ENCODE measurements at regions of chr9 and their contacts with region 1.

Region 1: DNA sequence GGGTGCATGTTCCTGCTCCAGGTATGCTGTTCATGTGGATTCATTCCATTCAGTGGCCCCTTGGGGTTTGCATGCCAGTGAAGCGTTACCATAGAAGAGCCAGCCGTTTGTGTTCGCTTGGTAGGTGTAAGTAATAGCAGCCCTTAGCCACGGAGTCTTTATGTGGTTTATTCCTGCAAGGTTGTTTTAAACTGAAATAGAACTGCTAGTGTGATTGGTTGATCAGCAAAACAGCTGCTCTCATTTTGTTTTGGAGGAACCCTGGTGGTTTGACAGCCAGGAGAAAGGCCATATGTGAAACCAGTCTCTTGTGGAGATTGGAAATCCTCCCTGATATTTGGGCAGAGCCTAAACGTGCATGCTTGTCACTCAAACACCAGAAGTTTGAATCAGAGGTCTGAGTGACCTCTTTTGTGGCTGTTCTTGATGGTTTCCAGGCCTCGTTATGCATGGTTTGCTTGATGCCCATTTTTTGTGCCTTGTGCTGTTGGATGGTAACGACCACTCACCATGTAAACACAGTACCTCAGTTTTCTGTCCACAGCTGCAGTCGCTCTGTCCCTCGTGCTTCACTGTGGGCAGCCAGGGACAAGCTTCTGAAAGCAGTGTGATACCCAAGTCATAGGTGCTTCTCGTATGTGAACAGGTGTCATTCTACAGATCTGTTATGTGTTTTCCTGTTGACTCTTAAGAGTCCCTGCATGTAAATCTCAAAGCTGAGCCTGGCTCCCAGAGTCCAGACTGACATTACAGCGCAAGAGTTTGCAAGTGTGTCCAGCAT is 58.3 kb upstream of the NXNL2 start:
- DNase-seq: peak; percentile 18
- ATAC-seq: peak; percentile 62
- H3K4me3 Mint-ChIP-seq: no peak overlapping the region
- H3K27ac Mint-ChIP-seq: peak overlapping the region; percentile 51
- H3K4me1 Mint-ChIP-seq: peaks cover 20% of the 10 kb centered on the region
- H3K27me3 Mint-ChIP-seq: no peaks in the 10 kb centered on the region

Region 2: DNA sequence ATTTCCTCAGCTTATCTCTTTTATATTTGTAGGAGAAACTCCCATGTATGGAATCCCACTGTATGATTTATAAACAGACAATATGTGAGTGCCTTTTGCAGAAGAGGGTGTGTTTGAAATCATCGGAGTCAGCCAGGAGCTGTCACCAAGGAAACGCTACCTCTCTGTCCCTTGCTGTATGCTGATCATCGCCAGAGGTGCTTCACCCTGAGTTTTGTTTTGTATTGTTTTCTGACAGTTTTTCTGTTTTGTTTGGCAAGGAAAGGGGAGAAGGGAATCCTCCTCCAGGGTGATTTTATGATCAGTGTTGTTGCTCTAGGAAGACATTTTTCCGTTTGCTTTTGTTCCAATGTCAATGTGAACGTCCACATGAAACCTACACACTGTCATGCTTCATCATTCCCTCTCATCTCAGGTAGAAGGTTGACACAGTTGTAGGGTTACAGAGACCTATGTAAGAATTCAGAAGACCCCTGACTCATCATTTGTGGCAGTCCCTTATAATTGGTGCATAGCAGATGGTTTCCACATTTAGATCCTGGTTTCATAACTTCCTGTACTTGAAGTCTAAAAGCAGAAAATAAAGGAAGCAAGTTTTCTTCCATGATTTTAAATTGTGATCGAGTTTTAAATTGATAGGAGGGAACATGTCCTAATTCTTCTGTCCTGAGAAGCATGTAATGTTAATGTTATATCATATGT is 768.7 kb before region 1 on chr9:
- CTCF ChIA-PET with region 1: no interaction called
- POLR2A ChIA-PET with region 1: no interaction called
- intact Hi-C with region 1: loop called in 1 of 2 experiments (anchors 1 kb)
- DNase-seq: peak; percentile 31
- ATAC-seq: peak; percentile 40
- H3K4me3 Mint-ChIP-seq: no peak overlapping the region
- H3K27ac Mint-ChIP-seq: no peak overlapping the region
- H3K4me1 Mint-ChIP-seq: peaks cover 44% of the 10 kb centered on the region
- H3K27me3 Mint-ChIP-seq: peaks cover 5% of the 10 kb centered on the region

Region 3: GRCh38 chr9:88173378-88173999 is 303.2 kb before region 1 on chr9:
- CTCF ChIA-PET with region 1: no interaction called
- POLR2A ChIA-PET with region 1: no interaction called
- intact Hi-C with region 1: loop called in 1 of 2 experiments (anchors 10 kb)
- DNase-seq: peak; percentile 67
- ATAC-seq: peak; percentile 55
- H3K4me3 Mint-ChIP-seq: no peak overlapping the region
- H3K27ac Mint-ChIP-seq: no peak overlapping the region
- H3K4me1 Mint-ChIP-seq: peaks cover under 1% of the 10 kb centered on the region
- H3K27me3 Mint-ChIP-seq: peaks cover 4% of the 10 kb centered on the region

Region 4: GRCh38 chr9:88310310-88310995 is 166.2 kb before region 1 on chr9:
- CTCF ChIA-PET with region 1: no interaction called
- POLR2A ChIA-PET with region 1: no interaction called
- intact Hi-C with region 1: no loop called
- DNase-seq: no peak
- ATAC-seq: no peak
- H3K4me3 Mint-ChIP-seq: no peak overlapping the region
- H3K27ac Mint-ChIP-seq: peak overlapping the region; percentile 25
- H3K4me1 Mint-ChIP-seq: peaks cover 31% of the 10 kb centered on the region
- H3K27me3 Mint-ChIP-seq: peaks cover 6% of the 10 kb centered on the region

Region 5: GRCh38 chr9:88399966-88400365 is 76.7 kb before region 1 on chr9:
- CTCF ChIA-PET with region 1: no interaction called
- POLR2A ChIA-PET with region 1: no interaction called
- intact Hi-C with region 1: no loop called
- DNase-seq: no peak
- ATAC-seq: no peak
- H3K4me3 Mint-ChIP-seq: no peak overlapping the region
- H3K27ac Mint-ChIP-seq: no peak overlapping the region
- H3K4me1 Mint-ChIP-seq: peaks cover 20% of the 10 kb centered on the region
- H3K27me3 Mint-ChIP-seq: no peaks in the 10 kb centered on the region

Region 6: DNA sequence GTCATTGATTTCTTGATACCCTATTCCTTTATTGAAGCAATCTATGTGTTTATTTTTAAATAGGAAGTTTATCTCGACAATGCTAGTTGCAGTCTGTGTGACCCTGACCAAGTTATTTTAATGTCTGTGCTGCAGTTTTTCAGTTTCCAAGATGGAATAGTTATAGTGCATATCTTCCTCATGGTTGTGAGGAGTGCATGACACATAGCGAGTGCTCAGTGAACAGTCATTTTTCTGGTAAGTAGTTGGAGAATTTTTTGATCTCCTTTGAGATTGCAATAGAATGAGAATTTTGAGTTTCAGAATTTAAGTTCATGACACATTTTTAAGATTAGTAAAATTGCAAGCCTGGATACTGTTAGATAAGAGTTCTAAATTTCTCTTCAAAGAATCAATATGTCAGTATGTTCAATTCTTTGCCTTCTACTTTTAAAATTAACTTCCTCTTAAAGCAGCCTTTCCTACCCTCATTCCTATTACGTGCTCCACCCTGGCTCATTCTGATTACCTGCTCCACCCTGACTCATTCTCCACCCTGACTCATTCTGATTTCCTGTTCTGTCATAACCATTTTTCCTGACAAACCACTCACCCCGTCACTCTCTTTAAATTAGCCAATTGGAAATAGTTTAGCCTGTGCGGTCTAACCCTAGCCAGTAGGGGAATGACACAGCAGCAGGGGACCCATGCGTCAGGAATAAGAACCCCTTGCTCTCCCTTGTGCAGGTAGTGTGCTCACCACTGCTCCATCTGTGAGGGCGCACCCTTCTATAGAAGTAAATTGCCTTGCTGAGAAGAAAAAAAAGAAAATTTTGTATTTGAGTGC is 57.8 kb before region 1 on chr9:
- CTCF ChIA-PET with region 1: no interaction called
- POLR2A ChIA-PET with region 1: no interaction called
- intact Hi-C with region 1: loop called in 1 of 2 experiments (anchors 1 kb)
- DNase-seq: peak; percentile 68
- ATAC-seq: peak; percentile 95
- H3K4me3 Mint-ChIP-seq: no peak overlapping the region
- H3K27ac Mint-ChIP-seq: peak overlapping the region; percentile 86
- H3K4me1 Mint-ChIP-seq: peaks cover 17% of the 10 kb centered on the region
- H3K27me3 Mint-ChIP-seq: no peaks in the 10 kb centered on the region

Region 7: GRCh38 chr9:88614359-88614758 is 137.7 kb after region 1 on chr9:
- CTCF ChIA-PET with region 1: no interaction called
- POLR2A ChIA-PET with region 1: no interaction called
- intact Hi-C with region 1: no loop called
- DNase-seq: no peak
- ATAC-seq: no peak
- H3K4me3 Mint-ChIP-seq: no peak overlapping the region
- H3K27ac Mint-ChIP-seq: no peak overlapping the region
- H3K4me1 Mint-ChIP-seq: no peaks in the 10 kb centered on the region
- H3K27me3 Mint-ChIP-seq: peaks cover 10% of the 10 kb centered on the region

Region 8: GRCh38 chr9:88991066-88992034 is 514.7 kb after region 1 on chr9 and contains the start of gene S1PR3:
- CTCF ChIA-PET with region 1: no interaction called
- POLR2A ChIA-PET with region 1: no interaction called
- intact Hi-C with region 1: loop called in 1 of 2 experiments (anchors 1 kb)
- DNase-seq: peak; percentile 69
- ATAC-seq: peak; percentile 27
- H3K4me3 Mint-ChIP-seq: peak within 1 kb of the TSS; percentile 66
- H3K27ac Mint-ChIP-seq: no peak within 1 kb of the TSS
- H3K4me1 Mint-ChIP-seq: peaks cover 31% of the 10 kb centered on the region
- H3K27me3 Mint-ChIP-seq: peaks cover 42% of the 10 kb centered on the region
- total RNA-seq, gene S1PR3: 0.56 to 1.2 TPM

Region 9: DNA sequence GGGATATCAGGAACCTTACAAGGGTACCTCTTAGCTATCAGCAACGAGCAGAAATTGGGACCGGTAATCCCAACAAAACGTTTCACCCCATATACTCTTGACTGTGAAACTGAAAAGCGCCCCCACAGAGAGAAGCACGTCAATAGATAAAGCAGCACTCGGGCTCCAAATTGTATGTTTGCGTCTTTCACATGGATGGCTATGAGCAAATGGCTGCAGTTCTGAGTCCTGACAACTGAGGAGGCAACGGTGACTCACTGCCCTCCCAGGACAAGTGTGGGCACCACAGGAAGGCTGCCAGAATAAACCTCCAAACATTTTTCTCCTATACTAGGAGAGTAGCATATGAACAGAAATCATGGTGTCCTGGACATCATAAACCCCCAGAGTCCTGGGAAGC is 984.6 kb after region 1 on chr9:
- CTCF ChIA-PET with region 1: no interaction called
- POLR2A ChIA-PET with region 1: no interaction called
- intact Hi-C with region 1: no loop called
- DNase-seq: peak; percentile 78
- ATAC-seq: peak; percentile 48
- H3K4me3 Mint-ChIP-seq: no peak overlapping the region
- H3K27ac Mint-ChIP-seq: peak overlapping the region; percentile 70
- H3K4me1 Mint-ChIP-seq: peaks cover 98% of the 10 kb centered on the region
- H3K27me3 Mint-ChIP-seq: no peaks in the 10 kb centered on the region

Measured in activated CD4-positive, alpha-beta T cell treated with anti-CD3 and anti-CD28 coated beads for 36 hours (primary cell).